ENCODE measurements at regions of chr3 and their contacts with region 1.

Region 1: DNA sequence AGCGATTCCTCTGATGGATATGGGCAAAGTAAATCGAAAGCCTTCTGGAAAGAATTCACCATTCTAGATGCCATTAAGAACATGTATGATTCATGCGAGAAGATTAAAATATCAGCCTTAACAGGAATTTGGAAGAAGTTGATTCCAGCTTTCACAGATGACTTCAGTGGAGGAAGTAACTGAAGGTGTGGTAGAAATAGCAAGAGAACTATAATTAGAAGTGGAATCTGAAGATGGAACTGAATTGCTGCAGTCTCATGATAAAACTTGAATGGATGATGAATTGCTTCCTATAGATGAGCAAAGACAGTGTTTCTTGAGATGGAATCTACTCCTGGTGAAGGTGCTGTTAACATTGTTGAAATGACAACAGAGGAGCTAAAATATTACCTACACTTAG is 30.1 kb upstream of the TBC1D23 start:
- DNase-seq: no peak
- ATAC-seq: no peak
- H3K4me3 ChIP-seq: no peak overlapping the region
- H3K4me3 Mint-ChIP-seq: no peak overlapping the region
- H3K27ac ChIP-seq: no peak overlapping the region
- H3K27ac Mint-ChIP-seq: no peak overlapping the region
- H3K4me1 ChIP-seq: no peaks in the 10 kb centered on the region
- H3K4me1 Mint-ChIP-seq: peaks cover 0 to 8% (median 5%) of the 10 kb centered on the region in 3 donors
- H3K27me3 ChIP-seq: no peaks in the 10 kb centered on the region
- H3K27me3 Mint-ChIP-seq: peaks cover 1 to 5% of the 10 kb centered on the region in 2 donors

Region 2: GRCh38 chr3:100032243-100032642 is 198.5 kb before region 1 on chr3:
- CTCF ChIA-PET with region 1: no interaction called
- POLR2A ChIA-PET with region 1: interaction called in 1 of 2 experiments, 11 read pairs
- DNase-seq: no peak
- ATAC-seq: no peak
- H3K4me3 ChIP-seq: no peak overlapping the region
- H3K4me3 Mint-ChIP-seq: no peak overlapping the region
- H3K27ac ChIP-seq: no peak overlapping the region
- H3K27ac Mint-ChIP-seq: no peak overlapping the region
- H3K4me1 ChIP-seq: no peaks in the 10 kb centered on the region
- H3K4me1 Mint-ChIP-seq: no peaks in the 10 kb centered on the region
- H3K27me3 ChIP-seq: no peaks in the 10 kb centered on the region
- H3K27me3 Mint-ChIP-seq: no peaks in the 10 kb centered on the region

Measured in T-cell (primary cell).